ENCODE measurements at regions of chr12 and their contacts with region 1.

Region 1: GRCh38 chr12:112815589-112816321 is 24.2 kb downstream of the RPH3A start:
- DNase-seq: peak; percentile 59
- H3K4me3 ChIP-seq: no peak overlapping the region
- H3K27ac ChIP-seq: peak overlapping the region in 1 of 2 experiments; percentile 100; a peak in 3 of 4 replicates
- H3K4me1 ChIP-seq: peaks cover 0 to 63% of the 10 kb centered on the region in 2 experiments; a peak in 2 of 4 replicates
- H3K27me3 ChIP-seq: no peaks in the 10 kb centered on the region
- CTCF ChIP-seq: no peak
- EP300 ChIP-seq: peak in 1 of 2 experiments; percentile 99; a peak in 3 of 4 replicates
- RAD21 ChIP-seq: peak; percentile 34

Region 2: DNA sequence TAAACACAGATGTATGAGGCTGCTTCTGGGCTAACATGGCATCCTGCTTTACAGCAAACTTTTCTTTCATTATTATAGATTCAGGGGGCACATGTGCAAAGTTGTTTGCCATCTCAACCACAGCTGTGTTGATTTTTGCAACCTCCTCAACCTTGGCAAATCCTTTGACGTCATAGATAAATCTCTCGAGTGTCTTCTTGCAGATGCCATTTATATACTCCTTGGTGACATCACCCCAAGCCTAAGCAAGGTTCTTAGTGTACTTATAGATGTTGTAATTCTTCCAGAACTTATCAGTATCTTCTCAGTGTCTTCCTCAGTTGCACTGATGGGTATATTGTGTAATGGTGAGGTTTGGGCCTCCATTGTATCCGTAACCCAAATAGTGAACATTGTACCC is 159.6 kb before region 1 on chr12:
- CTCF ChIA-PET with region 1: no interaction called
- POLR2A ChIA-PET with region 1: no interaction called
- DNase-seq: no peak
- H3K4me3 ChIP-seq: no peak overlapping the region
- H3K27ac ChIP-seq: no peak overlapping the region
- H3K4me1 ChIP-seq: no peaks in the 10 kb centered on the region
- H3K27me3 ChIP-seq: no peaks in the 10 kb centered on the region
- CTCF ChIP-seq: no peak
- EP300 ChIP-seq: no peak
- RAD21 ChIP-seq: no peak

Region 3: GRCh38 chr12:112792301-112792700 is 23.5 kb before region 1 on chr12:
- CTCF ChIA-PET with region 1: interaction called, 16 read pairs
- POLR2A ChIA-PET with region 1: interaction called, 6 read pairs
- DNase-seq: peak; percentile 61
- H3K4me3 ChIP-seq: peak overlapping the region in 1 of 2 experiments; percentile 48; a peak in 2 of 4 replicates
- H3K27ac ChIP-seq: peak overlapping the region in 1 of 2 experiments; percentile 98; a peak in 2 of 4 replicates
- H3K4me1 ChIP-seq: peaks cover 5 to 39% of the 10 kb centered on the region in 2 experiments; a peak in 3 of 4 replicates
- H3K27me3 ChIP-seq: no peaks in the 10 kb centered on the region
- CTCF ChIP-seq: no peak
- EP300 ChIP-seq: peak in 1 of 2 experiments; percentile 56; a peak in 2 of 4 replicates
- RAD21 ChIP-seq: peak; percentile 16; the same call in 1 of the 2 replicates

Region 4: GRCh38 chr12:112798006-112798760 is 17.6 kb before region 1 on chr12:
- CTCF ChIA-PET with region 1: interaction called, 16 read pairs
- POLR2A ChIA-PET with region 1: no interaction called
- DNase-seq: peak; percentile 30
- H3K4me3 ChIP-seq: no peak overlapping the region
- H3K27ac ChIP-seq: peak overlapping the region in 1 of 2 experiments; percentile 85; a peak in 2 of 4 replicates
- H3K4me1 ChIP-seq: peaks cover 7 to 75% of the 10 kb centered on the region in 2 experiments; a peak in 3 of 4 replicates
- H3K27me3 ChIP-seq: no peaks in the 10 kb centered on the region; the same call in 1 of the 2 replicates
- CTCF ChIP-seq: no peak
- EP300 ChIP-seq: peak in 1 of 2 experiments; percentile 72; a peak in 1 of 4 replicates
- RAD21 ChIP-seq: no peak

Region 5: GRCh38 chr12:112855375-112855774 is 39.6 kb after region 1 on chr12:
- CTCF ChIA-PET with region 1: interaction called, 15 read pairs
- POLR2A ChIA-PET with region 1: no interaction called
- DNase-seq: peak; percentile 61
- H3K4me3 ChIP-seq: no peak overlapping the region
- H3K27ac ChIP-seq: peak overlapping the region in 1 of 2 experiments; percentile 62; a peak in 2 of 4 replicates
- H3K4me1 ChIP-seq: peaks cover 0 to 30% of the 10 kb centered on the region in 2 experiments; a peak in 1 of 4 replicates
- H3K27me3 ChIP-seq: no peaks in the 10 kb centered on the region
- CTCF ChIP-seq: peak; percentile 37
- EP300 ChIP-seq: peak in 1 of 2 experiments; percentile 63; a peak in 2 of 4 replicates
- RAD21 ChIP-seq: peak; percentile 58

Measured in SK-N-SH (cell line).